CD4-positive, alpha-beta memory T cell (primary cell): ENCODE measurements at regions of chr16 and their contacts with region 1.

Region 1: GRCh38 chr16:30526823-30527635 is 663 bp upstream of the ZNF768 start:
- DNase-seq: peak; percentile 81 to 92 (median 82)
- H3K4me3 ChIP-seq: peak overlapping the region in 1 of 2 donors; percentile 75
- H3K4me3 Mint-ChIP-seq: peak overlapping the region; percentile 81 to 88 (median 85)
- H3K27ac ChIP-seq: peak overlapping the region; percentile 72
- H3K27ac Mint-ChIP-seq: peak overlapping the region; percentile 86 to 95 (median 89)
- H3K4me1 ChIP-seq: peaks cover 43% of the 10 kb centered on the region
- H3K4me1 Mint-ChIP-seq: peaks cover 24 to 46% (median 34%) of the 10 kb centered on the region in 4 donors
- H3K27me3 ChIP-seq: no peaks in the 10 kb centered on the region
- H3K27me3 Mint-ChIP-seq: no peaks in the 10 kb centered on the region

Region 2: DNA sequence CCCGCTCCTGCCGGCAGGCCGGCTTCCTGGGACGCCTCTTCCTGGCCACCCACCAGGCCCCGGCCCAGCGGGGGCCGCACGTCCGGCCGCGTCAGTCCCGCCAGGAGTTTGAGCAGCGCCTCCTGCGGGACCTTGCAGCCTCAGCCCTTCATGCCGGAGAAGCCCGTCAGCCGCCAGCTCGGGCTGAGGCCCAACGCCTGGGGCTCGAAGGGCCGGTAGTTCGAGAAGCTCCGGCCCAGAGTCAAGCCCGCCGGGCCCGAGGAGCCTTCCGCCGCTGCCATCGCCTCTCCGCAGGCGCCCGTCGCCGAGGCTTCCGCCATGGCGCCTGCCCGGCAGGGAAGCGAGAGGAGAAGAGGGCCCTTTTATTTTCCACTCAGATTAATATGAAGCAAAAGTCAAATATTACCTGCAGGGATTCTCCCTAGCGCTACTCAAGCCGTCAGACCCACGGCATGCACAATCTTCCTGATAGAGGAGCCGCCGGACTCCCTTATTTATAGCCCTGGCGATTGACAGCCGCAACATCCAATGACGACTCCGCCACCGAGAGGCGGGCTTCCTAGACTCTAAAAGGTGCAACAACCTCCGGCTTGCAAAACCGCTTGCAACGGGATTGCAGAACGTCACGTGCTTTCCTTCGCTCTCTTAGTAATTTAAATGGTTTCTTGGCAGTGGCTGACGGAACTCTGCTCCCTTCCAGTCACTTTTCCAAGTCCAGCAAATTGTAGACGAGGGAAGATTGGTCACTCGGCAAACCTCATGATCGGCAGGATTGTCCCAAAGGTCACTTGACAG is 81.4 kb before region 1 on chr16 and contains the start of gene SEPHS2:
- CTCF ChIA-PET with region 1: interaction called, 3 read pairs
- POLR2A ChIA-PET with region 1: interaction called, 6 read pairs
- intact Hi-C with region 1: loop called (anchors 2 kb)
- DNase-seq: peak; percentile 93 to 98 (median 94)
- H3K4me3 ChIP-seq: peak within 1 kb of the TSS; percentile 92 to 94
- H3K4me3 Mint-ChIP-seq: peak within 1 kb of the TSS; percentile 89 to 98 (median 96)
- H3K27ac ChIP-seq: peak within 1 kb of the TSS; percentile 96
- H3K27ac Mint-ChIP-seq: peak within 1 kb of the TSS; percentile 87 to 98 (median 96)
- H3K4me1 ChIP-seq: peaks cover 42% of the 10 kb centered on the region
- H3K4me1 Mint-ChIP-seq: peaks cover 24 to 44% (median 36%) of the 10 kb centered on the region in 4 donors
- H3K27me3 ChIP-seq: no peaks in the 10 kb centered on the region
- H3K27me3 Mint-ChIP-seq: no peaks in the 10 kb centered on the region
- total RNA-seq, gene SEPHS2: 42.0 to 44.4 TPM

Region 3: DNA sequence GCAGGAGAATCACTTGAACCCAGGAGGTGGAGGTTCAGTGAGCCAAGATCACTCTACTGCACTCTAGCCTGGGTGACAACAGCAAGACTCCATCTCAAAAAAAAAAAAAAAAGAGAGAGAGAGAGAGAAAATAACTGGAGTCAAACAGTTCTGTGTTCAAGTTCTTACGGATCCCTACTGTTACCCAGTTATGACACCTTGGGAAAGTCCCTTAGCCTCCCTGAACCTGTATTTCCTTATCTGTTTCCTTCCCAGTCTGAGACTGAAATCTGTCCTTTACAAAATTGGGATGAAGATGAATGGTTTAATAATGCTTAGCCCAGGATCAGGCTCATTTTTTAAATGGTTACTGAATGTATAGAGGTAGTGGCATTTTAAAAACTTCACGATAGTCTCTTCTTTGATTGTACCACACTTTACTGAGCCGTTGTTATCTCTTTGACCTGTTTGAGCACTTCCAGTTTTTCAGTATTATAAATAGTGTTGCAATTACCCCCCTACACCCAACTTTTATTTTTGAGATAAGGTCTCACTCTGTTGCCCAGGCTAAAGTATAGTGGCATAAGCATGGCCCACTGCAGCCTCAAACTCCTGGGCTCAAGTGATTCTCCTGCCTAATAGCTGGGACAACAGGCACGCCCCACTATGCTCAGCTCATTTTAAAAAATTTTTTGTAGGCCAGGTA is 17.8 kb before region 1 on chr16:
- CTCF ChIA-PET with region 1: interaction called, 4 read pairs
- POLR2A ChIA-PET with region 1: interaction called, 14 read pairs
- intact Hi-C with region 1: no loop called
- DNase-seq: no peak
- H3K4me3 ChIP-seq: no peak overlapping the region
- H3K4me3 Mint-ChIP-seq: no peak overlapping the region
- H3K27ac ChIP-seq: no peak overlapping the region
- H3K27ac Mint-ChIP-seq: peak overlapping the region in 5 of 7 donors; percentile 18 to 85 (median 48)
- H3K4me1 ChIP-seq: no peaks in the 10 kb centered on the region
- H3K4me1 Mint-ChIP-seq: peaks cover 0 to 12% (median 5%) of the 10 kb centered on the region in 4 donors
- H3K27me3 ChIP-seq: no peaks in the 10 kb centered on the region
- H3K27me3 Mint-ChIP-seq: no peaks in the 10 kb centered on the region

Region 4: GRCh38 chr16:30551781-30552180 is 24.8 kb after region 1 on chr16:
- CTCF ChIA-PET with region 1: interaction called, 16 read pairs
- POLR2A ChIA-PET with region 1: interaction called, 457 read pairs
- intact Hi-C with region 1: no loop called
- DNase-seq: peak; percentile 80 to 91 (median 88)
- H3K4me3 ChIP-seq: peak overlapping the region in 1 of 2 donors; percentile 13
- H3K4me3 Mint-ChIP-seq: peak overlapping the region; percentile 76 to 85 (median 80)
- H3K27ac ChIP-seq: peak overlapping the region; percentile 60
- H3K27ac Mint-ChIP-seq: peak overlapping the region; percentile 94 to 98 (median 96)
- H3K4me1 ChIP-seq: peaks cover 66% of the 10 kb centered on the region
- H3K4me1 Mint-ChIP-seq: peaks cover 32 to 63% (median 49%) of the 10 kb centered on the region in 4 donors
- H3K27me3 ChIP-seq: no peaks in the 10 kb centered on the region
- H3K27me3 Mint-ChIP-seq: no peaks in the 10 kb centered on the region

Region 5: GRCh38 chr16:30571695-30572600 is 44.9 kb after region 1 on chr16 and contains the start of gene ZNF688:
- CTCF ChIA-PET with region 1: interaction called, 5 read pairs
- POLR2A ChIA-PET with region 1: interaction called, 34 read pairs
- intact Hi-C with region 1: no loop called
- DNase-seq: peak; percentile 94 to 100 (median 97)
- H3K4me3 ChIP-seq: peak within 1 kb of the TSS; percentile 65 to 71
- H3K4me3 Mint-ChIP-seq: peak within 1 kb of the TSS; percentile 86 to 96 (median 91)
- H3K27ac ChIP-seq: peak within 1 kb of the TSS; percentile 90
- H3K27ac Mint-ChIP-seq: peak within 1 kb of the TSS; percentile 96 to 97 (median 97)
- H3K4me1 ChIP-seq: peaks cover 50% of the 10 kb centered on the region
- H3K4me1 Mint-ChIP-seq: peaks cover 22 to 51% (median 36%) of the 10 kb centered on the region in 4 donors
- H3K27me3 ChIP-seq: no peaks in the 10 kb centered on the region
- H3K27me3 Mint-ChIP-seq: no peaks in the 10 kb centered on the region
- total RNA-seq, gene ZNF688: 21.4 to 22.7 TPM

Region 6: GRCh38 chr16:30609926-30610839 is 83.2 kb after region 1 on chr16 and contains the start of gene ZNF689:
- CTCF ChIA-PET with region 1: interaction called, 3 read pairs
- POLR2A ChIA-PET with region 1: interaction called, 10 read pairs
- intact Hi-C with region 1: no loop called
- DNase-seq: peak; percentile 92 to 98 (median 95)
- H3K4me3 ChIP-seq: peak within 1 kb of the TSS; percentile 71 to 99
- H3K4me3 Mint-ChIP-seq: peak within 1 kb of the TSS; percentile 85 to 96 (median 94)
- H3K27ac ChIP-seq: peak within 1 kb of the TSS; percentile 97
- H3K27ac Mint-ChIP-seq: peak within 1 kb of the TSS; percentile 93 to 98 (median 96)
- H3K4me1 ChIP-seq: peaks cover 21% of the 10 kb centered on the region
- H3K4me1 Mint-ChIP-seq: peaks cover 10 to 18% (median 13%) of the 10 kb centered on the region in 4 donors
- H3K27me3 ChIP-seq: no peaks in the 10 kb centered on the region
- H3K27me3 Mint-ChIP-seq: no peaks in the 10 kb centered on the region
- total RNA-seq, gene ZNF689: 13.1 to 14.5 TPM

Region 7: GRCh38 chr16:30692381-30693064 is 165.5 kb after region 1 on chr16:
- CTCF ChIA-PET with region 1: no interaction called
- POLR2A ChIA-PET with region 1: interaction called, 3 read pairs
- intact Hi-C with region 1: loop called (anchors 5 kb)
- DNase-seq: no peak
- H3K4me3 ChIP-seq: no peak overlapping the region
- H3K4me3 Mint-ChIP-seq: no peak overlapping the region
- H3K27ac ChIP-seq: no peak overlapping the region
- H3K27ac Mint-ChIP-seq: peak overlapping the region in 5 of 7 donors; percentile 20 to 62 (median 29)
- H3K4me1 ChIP-seq: peaks cover 14% of the 10 kb centered on the region
- H3K4me1 Mint-ChIP-seq: peaks cover 8 to 19% (median 12%) of the 10 kb centered on the region in 4 donors
- H3K27me3 ChIP-seq: no peaks in the 10 kb centered on the region
- H3K27me3 Mint-ChIP-seq: no peaks in the 10 kb centered on the region

Region 8: GRCh38 chr16:30715737-30716445 is 188.9 kb after region 1 on chr16:
- CTCF ChIA-PET with region 1: no interaction called
- POLR2A ChIA-PET with region 1: no interaction called
- intact Hi-C with region 1: no loop called
- DNase-seq: peak; percentile 33 to 80 (median 45)
- H3K4me3 ChIP-seq: no peak overlapping the region
- H3K4me3 Mint-ChIP-seq: peak overlapping the region; percentile 2 to 86 (median 45)
- H3K27ac ChIP-seq: peak overlapping the region; percentile 18
- H3K27ac Mint-ChIP-seq: peak overlapping the region; percentile 80 to 98 (median 93)
- H3K4me1 ChIP-seq: peaks cover 21% of the 10 kb centered on the region
- H3K4me1 Mint-ChIP-seq: peaks cover 26 to 44% (median 34%) of the 10 kb centered on the region in 4 donors
- H3K27me3 ChIP-seq: no peaks in the 10 kb centered on the region
- H3K27me3 Mint-ChIP-seq: no peaks in the 10 kb centered on the region